ENCODE measurements at regions of chr3 and their contacts with region 1.

Region 1: GRCh38 chr3:190119461-190120268 is 1.0 kb downstream of the P3H2 start:
- DNase-seq: no peak
- ATAC-seq: no peak; the same call in 1 of the 2 replicates
- H3K4me3 ChIP-seq: peak overlapping the region; percentile 63 to 70
- H3K27ac ChIP-seq: peak overlapping the region; percentile 84
- H3K4me1 ChIP-seq: peaks cover 40% of the 10 kb centered on the region
- H3K27me3 ChIP-seq: no peaks in the 10 kb centered on the region
- CTCF ChIP-seq: no peak

Region 2: GRCh38 chr3:189967254-189967865 is 152.3 kb before region 1 on chr3:
- CTCF ChIA-PET with region 1: interaction called, 3 read pairs
- POLR2A ChIA-PET with region 1: no interaction called
- in situ Hi-C with region 1: no loop called
- intact Hi-C with region 1: loop called (anchors 5 kb)
- DNase-seq: peak; percentile 75
- ATAC-seq: peak; percentile 79
- H3K4me3 ChIP-seq: no peak overlapping the region
- H3K27ac ChIP-seq: peak overlapping the region; percentile 6; the same call in 1 of the 2 replicates
- H3K4me1 ChIP-seq: 0 out of 2 replicates have a peak, but pooled peaks cover 2% of the 10 kb centered on the region
- H3K27me3 ChIP-seq: no peaks in the 10 kb centered on the region
- CTCF ChIP-seq: peak; percentile 82; the same call in 1 of the 2 replicates

Region 3: DNA sequence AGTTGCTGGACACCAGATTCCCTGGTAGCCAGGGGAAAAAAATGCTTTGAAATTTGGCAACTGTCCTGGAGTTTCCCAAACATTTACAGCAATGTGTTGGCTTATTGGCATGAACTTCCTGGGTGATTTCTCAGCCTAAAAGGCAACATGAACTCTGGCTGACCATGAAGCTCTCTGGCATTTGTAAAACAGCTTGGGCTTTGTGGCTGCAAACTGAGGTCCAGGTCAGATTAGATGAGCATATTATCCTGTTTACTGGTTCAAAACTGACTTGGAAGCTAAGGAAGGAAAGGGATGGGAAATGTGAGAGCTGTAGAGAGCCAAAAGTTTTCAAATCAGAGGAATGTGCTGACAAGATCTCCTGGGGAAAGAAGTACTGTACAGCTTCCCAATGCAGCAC is 138.0 kb before region 1 on chr3:
- CTCF ChIA-PET with region 1: no interaction called
- POLR2A ChIA-PET with region 1: interaction called, 11 read pairs
- in situ Hi-C with region 1: no loop called
- intact Hi-C with region 1: no loop called
- DNase-seq: no peak
- ATAC-seq: peak; percentile 76
- H3K4me3 ChIP-seq: no peak overlapping the region
- H3K27ac ChIP-seq: peak overlapping the region; percentile 25
- H3K4me1 ChIP-seq: peaks cover 11% of the 10 kb centered on the region; the same call in 1 of the 2 replicates
- H3K27me3 ChIP-seq: no peaks in the 10 kb centered on the region
- CTCF ChIP-seq: no peak

Region 4: GRCh38 chr3:190024912-190025311 is 94.8 kb before region 1 on chr3:
- CTCF ChIA-PET with region 1: no interaction called
- POLR2A ChIA-PET with region 1: no interaction called
- in situ Hi-C with region 1: no loop called
- intact Hi-C with region 1: loop called (anchors 5 kb)
- DNase-seq: no peak
- ATAC-seq: no peak
- H3K4me3 ChIP-seq: no peak overlapping the region
- H3K27ac ChIP-seq: peak overlapping the region; percentile 45; the same call in 1 of the 2 replicates
- H3K4me1 ChIP-seq: no peaks in the 10 kb centered on the region; the same call in 1 of the 2 replicates
- H3K27me3 ChIP-seq: no peaks in the 10 kb centered on the region
- CTCF ChIP-seq: no peak

Region 5: GRCh38 chr3:190197346-190197763 is 77.7 kb after region 1 on chr3:
- CTCF ChIA-PET with region 1: interaction called, 4 read pairs
- POLR2A ChIA-PET with region 1: no interaction called
- in situ Hi-C with region 1: no loop called
- intact Hi-C with region 1: loop called (anchors 1 kb)
- DNase-seq: no peak
- ATAC-seq: no peak
- H3K4me3 ChIP-seq: no peak overlapping the region
- H3K27ac ChIP-seq: peak overlapping the region; percentile 10; the same call in 1 of the 2 replicates
- H3K4me1 ChIP-seq: peaks cover 5% of the 10 kb centered on the region; the same call in 1 of the 2 replicates
- H3K27me3 ChIP-seq: no peaks in the 10 kb centered on the region
- CTCF ChIP-seq: no peak

Region 6: DNA sequence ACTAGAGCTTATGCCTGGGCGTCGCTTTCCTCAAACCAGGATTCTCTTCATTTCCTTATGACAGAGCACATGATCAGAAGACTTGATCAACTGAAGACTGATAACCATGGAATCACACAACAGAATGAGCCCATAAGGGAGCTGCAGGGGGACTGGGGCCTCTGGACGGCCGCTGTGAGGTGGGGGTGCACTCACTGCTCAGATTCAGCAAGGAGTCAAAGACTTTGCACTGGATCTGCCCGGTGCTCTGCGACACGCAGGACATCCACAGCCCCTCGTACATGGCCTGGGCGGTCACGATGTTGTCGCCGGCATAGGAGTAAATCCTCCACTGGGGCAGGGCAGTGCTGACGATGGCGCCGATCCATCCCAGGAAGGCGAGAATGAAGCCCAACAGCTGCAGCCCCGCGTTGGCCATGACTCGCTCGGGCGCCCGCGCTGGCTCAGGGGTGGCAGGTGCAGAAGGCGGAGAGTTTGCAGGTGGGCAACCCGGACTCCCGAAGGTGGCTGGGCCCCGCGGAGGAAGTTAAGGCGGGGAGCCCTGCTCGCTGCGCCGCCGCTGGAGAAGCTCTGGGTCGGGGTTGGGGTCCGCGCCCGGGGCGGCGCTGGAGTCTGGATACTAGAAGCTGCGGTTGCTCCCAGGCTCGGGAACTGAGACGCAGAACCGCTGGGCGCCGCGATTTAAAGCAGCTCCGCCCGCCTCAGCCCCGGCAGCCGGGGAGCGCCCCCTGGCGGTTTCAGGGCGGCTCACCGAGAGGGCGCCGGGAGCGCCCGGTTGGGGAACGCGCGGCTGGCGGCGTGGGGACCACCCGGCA is 202.3 kb after region 1 on chr3 and contains the start of gene CLDN1:
- CTCF ChIA-PET with region 1: interaction called, 8 read pairs
- POLR2A ChIA-PET with region 1: no interaction called
- in situ Hi-C with region 1: no loop called
- intact Hi-C with region 1: loop called (anchors 5 kb)
- DNase-seq: no peak
- ATAC-seq: peak; percentile 96
- H3K4me3 ChIP-seq: peak within 1 kb of the TSS; percentile 66 to 67
- H3K27ac ChIP-seq: peak within 1 kb of the TSS; percentile 79
- H3K4me1 ChIP-seq: peaks cover 17% of the 10 kb centered on the region; the same call in 1 of the 2 replicates
- H3K27me3 ChIP-seq: 0 out of 2 replicates have a peak, but pooled peaks cover 2% of the 10 kb centered on the region
- CTCF ChIP-seq: peak; percentile 100
- total RNA-seq, gene CLDN1: 30.9 TPM

Measured in Panc1 (cell line).